Mammary epithelial cell (primary cell): ENCODE measurements at regions of chr5 and their contacts with region 1.

Region 1: DNA sequence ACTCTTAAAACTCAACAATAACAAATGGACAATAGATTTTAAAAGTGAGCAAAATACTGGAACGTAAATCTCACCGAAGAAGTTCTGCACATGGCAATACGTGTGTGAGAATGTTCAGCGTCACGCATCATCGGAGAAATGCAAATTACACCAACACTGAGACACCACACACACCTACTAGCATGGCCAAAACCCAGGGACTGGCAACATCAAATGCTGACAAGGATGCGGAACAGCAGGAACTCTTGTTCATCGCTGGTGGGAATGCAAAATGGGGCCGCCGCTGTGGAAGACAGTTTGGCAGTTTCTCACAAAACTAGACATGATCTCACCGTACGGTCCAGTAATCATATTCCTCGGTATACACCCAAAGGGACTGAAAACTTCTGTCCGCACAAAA is 21.6 kb upstream of the CLPTM1L start:
- DNase-seq: no peak
- H3K4me3 ChIP-seq: no peak overlapping the region
- H3K27ac ChIP-seq: no peak overlapping the region
- H3K4me1 ChIP-seq: no peaks in the 10 kb centered on the region
- H3K27me3 ChIP-seq: no peaks in the 10 kb centered on the region
- CTCF ChIP-seq: no peak

Region 2: DNA sequence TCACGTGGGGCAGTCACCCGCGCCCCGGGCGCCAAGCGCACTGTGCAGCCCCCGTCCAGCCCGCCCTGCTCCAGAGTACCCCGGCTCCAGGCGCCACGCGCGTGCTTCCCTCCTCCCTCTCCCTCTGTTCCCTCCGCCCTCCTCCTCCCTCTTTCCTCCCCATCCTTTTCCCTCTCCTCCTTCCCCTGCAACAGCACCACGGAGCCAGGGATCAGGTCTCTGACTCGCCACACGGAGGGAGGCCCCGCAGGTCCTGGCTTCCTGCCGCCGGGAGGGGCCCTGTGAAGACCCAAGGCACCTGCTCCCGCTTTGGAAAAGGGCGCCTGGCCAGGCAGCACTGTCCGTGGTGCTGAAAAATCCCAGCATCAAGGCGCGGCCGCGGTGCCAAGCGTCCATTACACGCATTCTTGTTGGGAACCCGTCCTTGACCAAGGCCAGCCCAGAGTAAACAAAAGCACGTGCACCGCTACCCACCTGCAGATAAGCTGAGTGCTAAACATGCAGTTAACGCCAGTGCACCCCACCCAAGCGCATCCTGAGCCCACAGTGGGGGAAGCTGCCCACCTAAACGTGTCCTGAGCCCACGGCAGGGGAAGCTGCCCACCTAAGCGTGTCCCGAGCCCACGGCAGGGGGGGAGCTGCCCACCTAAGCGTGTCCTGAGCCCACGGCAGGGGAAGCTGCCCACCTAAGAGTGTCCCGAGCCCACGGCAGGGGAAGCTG is 119.6 kb before region 1 on chr5:
- CTCF ChIA-PET with region 1: interaction called, 21 read pairs
- dilution Hi-C with region 1: no loop called
- in situ Hi-C with region 1: no loop called
- intact Hi-C with region 1: no loop called
- DNase-seq: peak; percentile 24
- H3K4me3 ChIP-seq: no peak overlapping the region
- H3K27ac ChIP-seq: no peak overlapping the region
- H3K4me1 ChIP-seq: no peaks in the 10 kb centered on the region
- H3K27me3 ChIP-seq: no peaks in the 10 kb centered on the region
- CTCF ChIP-seq: no peak

Region 3: GRCh38 chr5:1325870-1326532 is 40.5 kb before region 1 on chr5:
- CTCF ChIA-PET with region 1: no interaction called
- dilution Hi-C with region 1: no loop called
- in situ Hi-C with region 1: no loop called
- intact Hi-C with region 1: no loop called
- DNase-seq: no peak
- H3K4me3 ChIP-seq: no peak overlapping the region
- H3K27ac ChIP-seq: no peak overlapping the region
- H3K4me1 ChIP-seq: peaks cover 42% of the 10 kb centered on the region
- H3K27me3 ChIP-seq: no peaks in the 10 kb centered on the region
- CTCF ChIP-seq: no peak

Region 4: GRCh38 chr5:1409381-1410110 is 43.0 kb after region 1 on chr5:
- CTCF ChIA-PET with region 1: no interaction called
- dilution Hi-C with region 1: loop called (anchors 5 kb)
- in situ Hi-C with region 1: no loop called
- intact Hi-C with region 1: no loop called
- DNase-seq: peak; percentile 6
- H3K4me3 ChIP-seq: no peak overlapping the region
- H3K27ac ChIP-seq: no peak overlapping the region
- H3K4me1 ChIP-seq: no peaks in the 10 kb centered on the region
- H3K27me3 ChIP-seq: no peaks in the 10 kb centered on the region
- CTCF ChIP-seq: no peak